Activated CD4-positive, alpha-beta T cell treated with anti-CD3 and anti-CD28 coated beads for 36 hours (primary cell): ENCODE measurements at regions of chr3 and their contacts with region 1.

Region 1: GRCh38 chr3:142828703-142829305 is 60.1 kb downstream of the PCOLCE2 start:
- DNase-seq: peak; percentile 89
- ATAC-seq: peak; percentile 100
- H3K4me3 Mint-ChIP-seq: no peak overlapping the region
- H3K27ac Mint-ChIP-seq: no peak overlapping the region
- H3K4me1 Mint-ChIP-seq: no peaks in the 10 kb centered on the region
- H3K27me3 Mint-ChIP-seq: peaks cover 12% of the 10 kb centered on the region

Region 2: GRCh38 chr3:142481196-142481595 is 347.6 kb before region 1 on chr3:
- CTCF ChIA-PET with region 1: no interaction called
- POLR2A ChIA-PET with region 1: no interaction called
- intact Hi-C with region 1: no loop called
- DNase-seq: no peak
- ATAC-seq: no peak
- H3K4me3 Mint-ChIP-seq: no peak overlapping the region
- H3K27ac Mint-ChIP-seq: no peak overlapping the region
- H3K4me1 Mint-ChIP-seq: peaks cover 7% of the 10 kb centered on the region
- H3K27me3 Mint-ChIP-seq: no peaks in the 10 kb centered on the region

Region 3: GRCh38 chr3:142787719-142788118 is 41.1 kb before region 1 on chr3:
- CTCF ChIA-PET with region 1: interaction called, 13 read pairs
- POLR2A ChIA-PET with region 1: no interaction called
- intact Hi-C with region 1: no loop called
- DNase-seq: no peak
- ATAC-seq: no peak
- H3K4me3 Mint-ChIP-seq: no peak overlapping the region
- H3K27ac Mint-ChIP-seq: no peak overlapping the region
- H3K4me1 Mint-ChIP-seq: no peaks in the 10 kb centered on the region
- H3K27me3 Mint-ChIP-seq: no peaks in the 10 kb centered on the region

Region 4: DNA sequence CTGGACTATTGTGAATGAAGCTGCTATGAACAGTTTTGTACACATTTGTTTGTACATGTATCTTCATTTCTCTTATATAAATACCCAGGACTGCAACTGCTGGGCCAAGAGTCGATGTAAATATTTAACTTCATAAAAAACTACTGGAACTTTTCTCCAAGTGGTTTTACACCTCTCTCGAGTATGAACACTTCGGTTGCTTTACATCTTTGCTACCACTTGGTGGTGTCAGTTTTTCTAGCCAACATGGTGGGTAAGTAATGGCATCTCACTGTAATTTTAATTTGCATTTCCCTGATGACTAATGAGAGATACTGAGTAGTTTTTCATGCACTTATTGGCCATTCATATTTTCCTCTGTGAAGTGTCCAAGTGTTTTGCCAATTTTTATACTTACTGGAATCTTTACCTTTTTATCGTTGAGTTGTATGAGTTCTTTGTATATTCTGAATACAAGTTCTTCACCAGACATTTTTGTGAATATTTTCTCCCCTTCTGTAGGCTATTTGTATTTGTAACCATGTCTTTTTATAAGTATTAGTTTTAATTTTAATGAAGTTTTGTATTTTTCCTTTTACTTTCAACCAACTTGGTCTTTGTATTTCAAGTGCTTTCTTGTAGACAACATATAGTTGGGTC is 15.7 kb after region 1 on chr3:
- CTCF ChIA-PET with region 1: interaction called, 13 read pairs
- POLR2A ChIA-PET with region 1: no interaction called
- intact Hi-C with region 1: no loop called
- DNase-seq: no peak
- ATAC-seq: peak; percentile 90
- H3K4me3 Mint-ChIP-seq: no peak overlapping the region
- H3K27ac Mint-ChIP-seq: no peak overlapping the region
- H3K4me1 Mint-ChIP-seq: peaks cover 2% of the 10 kb centered on the region
- H3K27me3 Mint-ChIP-seq: peaks cover 4% of the 10 kb centered on the region

Region 5: GRCh38 chr3:142861926-142862325 is 33.1 kb after region 1 on chr3:
- CTCF ChIA-PET with region 1: interaction called, 13 read pairs
- POLR2A ChIA-PET with region 1: no interaction called
- intact Hi-C with region 1: no loop called
- DNase-seq: no peak
- ATAC-seq: no peak
- H3K4me3 Mint-ChIP-seq: no peak overlapping the region
- H3K27ac Mint-ChIP-seq: no peak overlapping the region
- H3K4me1 Mint-ChIP-seq: peaks cover 10% of the 10 kb centered on the region
- H3K27me3 Mint-ChIP-seq: peaks cover 27% of the 10 kb centered on the region

Region 6: GRCh38 chr3:142981108-142981507 is 152.3 kb after region 1 on chr3:
- CTCF ChIA-PET with region 1: interaction called, 34 read pairs
- POLR2A ChIA-PET with region 1: no interaction called
- intact Hi-C with region 1: loop called in 1 of 2 experiments (anchors 2 kb)
- DNase-seq: no peak
- ATAC-seq: no peak
- H3K4me3 Mint-ChIP-seq: no peak overlapping the region
- H3K27ac Mint-ChIP-seq: no peak overlapping the region
- H3K4me1 Mint-ChIP-seq: no peaks in the 10 kb centered on the region
- H3K27me3 Mint-ChIP-seq: peaks cover 16% of the 10 kb centered on the region

Region 7: GRCh38 chr3:142993958-142994442 is 165.2 kb after region 1 on chr3:
- CTCF ChIA-PET with region 1: interaction called, 65 read pairs
- POLR2A ChIA-PET with region 1: no interaction called
- intact Hi-C with region 1: loop called (anchors 1 kb)
- DNase-seq: peak; percentile 76
- ATAC-seq: peak; percentile 74
- H3K4me3 Mint-ChIP-seq: no peak overlapping the region
- H3K27ac Mint-ChIP-seq: no peak overlapping the region
- H3K4me1 Mint-ChIP-seq: peaks cover 4% of the 10 kb centered on the region
- H3K27me3 Mint-ChIP-seq: peaks cover 5% of the 10 kb centered on the region